ENCODE measurements at regions of chr17 and their contacts with region 1.

Region 1: GRCh38 chr17:41688699-41689496 is at the start of gene EIF1:
- DNase-seq: peak; percentile 100
- H3K4me3 ChIP-seq: peak within 1 kb of the TSS; percentile 92 to 99 (median 94)
- H3K27ac ChIP-seq: peak within 1 kb of the TSS; percentile 97
- H3K4me1 ChIP-seq: peaks cover 0 to 3% (median 2%) of the 10 kb centered on the region in 4 experiments; a peak in 4 of 7 replicates
- H3K27me3 ChIP-seq: no peaks in the 10 kb centered on the region
- CTCF ChIP-seq: no peak
- EP300 ChIP-seq: peak in 1 of 2 experiments; percentile 48; a peak in 1 of 3 replicates
- POLR2A ChIP-seq: peak; percentile 99
- RAD21 ChIP-seq: no peak
- total RNA-seq, gene EIF1: 528 and 539 TPM in 2 replicates

Region 2: GRCh38 chr17:41672153-41672552 is 16.7 kb before region 1 on chr17:
- CTCF ChIA-PET with region 1: interaction called, 19 read pairs
- POLR2A ChIA-PET with region 1: interaction called, 233 read pairs
- DNase-seq: no peak
- H3K4me3 ChIP-seq: no peak overlapping the region
- H3K27ac ChIP-seq: no peak overlapping the region
- H3K4me1 ChIP-seq: peaks cover 2 to 17% (median 6%) of the 10 kb centered on the region in 4 experiments
- H3K27me3 ChIP-seq: no peaks in the 10 kb centered on the region
- CTCF ChIP-seq: no peak
- EP300 ChIP-seq: no peak
- POLR2A ChIP-seq: no peak
- RAD21 ChIP-seq: no peak

Region 3: GRCh38 chr17:41786227-41787020 is 97.5 kb after region 1 on chr17 and contains the start of gene JUP:
- CTCF ChIA-PET with region 1: interaction called, 6 read pairs
- POLR2A ChIA-PET with region 1: interaction called, 84 read pairs
- DNase-seq: peak; percentile 100
- H3K4me3 ChIP-seq: peak within 1 kb of the TSS; percentile 64 to 80 (median 72)
- H3K27ac ChIP-seq: peak within 1 kb of the TSS; percentile 70
- H3K4me1 ChIP-seq: peaks cover 2 to 19% (median 14%) of the 10 kb centered on the region in 4 experiments
- H3K27me3 ChIP-seq: no peaks in the 10 kb centered on the region
- CTCF ChIP-seq: peak; percentile 71 to 78 (median 76)
- EP300 ChIP-seq: 0 out of 3 replicates have a peak, but pooled peaks of 1 of the 2 experiments have one; percentile 54
- POLR2A ChIP-seq: peak; percentile 70 to 84
- RAD21 ChIP-seq: peak; percentile 26 to 52; a peak in 3 of 4 replicates
- total RNA-seq, gene JUP: 98.6 and 102 TPM in 2 replicates

Region 4: GRCh38 chr17:41864836-41865595 is 176.1 kb after region 1 on chr17 and contains the start of gene KLHL11:
- CTCF ChIA-PET with region 1: interaction called, 3 read pairs
- POLR2A ChIA-PET with region 1: interaction called, 21 read pairs
- DNase-seq: peak; percentile 58 to 90
- H3K4me3 ChIP-seq: peak within 1 kb of the TSS; percentile 86 to 94 (median 92)
- H3K27ac ChIP-seq: peak within 1 kb of the TSS; percentile 42
- H3K4me1 ChIP-seq: peaks cover 9 to 25% (median 13%) of the 10 kb centered on the region in 4 experiments
- H3K27me3 ChIP-seq: no peaks in the 10 kb centered on the region
- CTCF ChIP-seq: no peak; a peak in 1 of 4 replicates
- EP300 ChIP-seq: peak in 1 of 2 experiments; percentile 56; a peak in 1 of 3 replicates
- POLR2A ChIP-seq: peak; percentile 42 to 87
- RAD21 ChIP-seq: peak in 1 of 2 experiments; percentile 0; a peak in 2 of 4 replicates
- total RNA-seq, gene KLHL11: 12.8 and 13.7 TPM in 2 replicates